ENCODE measurements at regions of chr1 and their contacts with region 1.

Region 1: DNA sequence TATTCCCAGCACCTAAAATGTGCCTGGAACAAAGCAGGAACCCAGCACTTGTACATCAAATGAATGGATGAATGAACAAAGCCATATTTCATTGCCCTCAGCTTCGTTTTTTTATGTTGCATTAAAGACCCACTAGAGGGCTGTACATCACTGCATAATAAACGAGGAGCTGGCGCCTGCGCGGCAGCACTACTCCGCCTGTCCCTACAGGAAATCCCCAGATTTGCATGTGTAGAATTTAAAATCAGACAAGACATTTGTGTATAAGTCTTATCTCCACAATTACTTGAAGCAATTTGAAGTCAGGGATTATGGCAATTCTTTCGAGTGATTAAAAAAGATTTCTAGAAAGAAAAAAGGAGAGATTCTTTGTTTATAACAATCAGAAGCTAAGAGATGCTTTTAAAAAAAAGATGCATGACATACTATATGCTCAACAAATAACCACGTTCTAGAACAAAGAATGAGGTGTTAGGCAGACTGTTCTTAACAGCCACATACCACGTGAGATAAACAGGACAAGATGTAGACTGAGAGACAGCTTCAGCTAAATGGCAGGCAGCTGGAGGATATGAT is 5.4 kb upstream of the NEK2 start:
- DNase-seq: peak; percentile 58 to 93
- ATAC-seq: peak; percentile 91 to 96 (median 93)
- H3K4me3 ChIP-seq: no peak overlapping the region
- H3K4me3 Mint-ChIP-seq: peak overlapping the region; percentile 74
- H3K27ac ChIP-seq: peak overlapping the region; percentile 77
- H3K27ac Mint-ChIP-seq: peak overlapping the region; percentile 91 to 98
- H3K4me1 ChIP-seq: peaks cover 30% of the 10 kb centered on the region
- H3K4me1 Mint-ChIP-seq: peaks cover 30 to 32% of the 10 kb centered on the region in 2 donors
- H3K27me3 ChIP-seq: no peaks in the 10 kb centered on the region
- H3K27me3 Mint-ChIP-seq: no peaks in the 10 kb centered on the region
- CTCF ChIP-seq: peak; percentile 72

Region 2: GRCh38 chr1:211667065-211667617 is 13.7 kb before region 1 on chr1:
- intact Hi-C with region 1: no loop called
- DNase-seq: no peak
- ATAC-seq: no peak
- H3K4me3 ChIP-seq: no peak overlapping the region
- H3K4me3 Mint-ChIP-seq: no peak overlapping the region
- H3K27ac ChIP-seq: no peak overlapping the region
- H3K27ac Mint-ChIP-seq: no peak overlapping the region
- H3K4me1 ChIP-seq: no peaks in the 10 kb centered on the region
- H3K4me1 Mint-ChIP-seq: no peaks in the 10 kb centered on the region
- H3K27me3 ChIP-seq: no peaks in the 10 kb centered on the region
- H3K27me3 Mint-ChIP-seq: no peaks in the 10 kb centered on the region
- CTCF ChIP-seq: no peak

Region 3: GRCh38 chr1:211732293-211732980 is 51.6 kb after region 1 on chr1:
- intact Hi-C with region 1: no loop called
- DNase-seq: no peak
- ATAC-seq: no peak
- H3K4me3 ChIP-seq: no peak overlapping the region
- H3K4me3 Mint-ChIP-seq: no peak overlapping the region
- H3K27ac ChIP-seq: no peak overlapping the region
- H3K27ac Mint-ChIP-seq: no peak overlapping the region
- H3K4me1 ChIP-seq: peaks cover 2% of the 10 kb centered on the region
- H3K4me1 Mint-ChIP-seq: peaks cover 2 to 3% of the 10 kb centered on the region in 2 donors
- H3K27me3 ChIP-seq: no peaks in the 10 kb centered on the region
- H3K27me3 Mint-ChIP-seq: peaks cover 0 to 8% of the 10 kb centered on the region in 2 donors
- CTCF ChIP-seq: no peak

Region 4: DNA sequence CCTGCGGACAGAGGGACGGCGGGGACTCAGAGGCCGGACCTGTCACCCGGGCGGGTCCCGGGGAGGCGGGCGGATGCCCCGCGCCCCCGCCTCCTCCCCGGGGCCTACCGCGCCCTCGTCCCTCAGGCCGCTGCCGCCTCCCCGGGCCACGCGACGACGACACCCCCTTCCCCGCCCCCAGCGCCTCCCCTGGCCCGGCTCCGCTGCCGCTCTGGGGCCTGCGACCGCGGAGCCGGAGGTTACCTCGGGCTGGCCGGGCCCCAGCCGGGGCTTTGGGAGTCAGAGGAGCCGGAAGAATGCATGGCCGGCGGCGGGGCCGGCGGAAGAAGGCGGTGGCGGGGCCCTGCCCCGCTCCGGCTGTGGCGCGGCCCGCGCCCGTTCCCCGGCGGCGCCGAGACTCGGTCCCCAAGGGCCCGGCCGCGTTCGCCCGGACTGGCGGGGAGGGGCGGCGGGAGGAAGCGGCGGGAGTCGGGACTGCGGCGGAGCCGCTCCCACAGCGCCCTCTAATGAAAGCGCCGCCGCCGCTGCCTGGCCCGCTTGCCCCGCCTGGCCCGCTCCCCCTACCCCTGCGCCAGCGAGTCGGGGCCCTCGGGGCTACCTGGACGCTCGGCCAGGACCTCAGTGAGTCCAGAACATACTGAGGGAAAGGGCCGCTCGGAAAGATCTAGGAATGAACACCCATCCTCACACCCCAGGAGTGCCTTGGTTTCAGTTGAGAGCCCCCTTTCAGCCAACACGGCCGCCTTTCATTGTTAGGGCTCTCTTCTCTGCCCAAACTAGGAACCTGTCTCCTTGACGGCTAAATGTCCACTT is 149.7 kb after region 1 on chr1 and contains the start of gene LPGAT1:
- intact Hi-C with region 1: loop called (anchors 2 kb)
- DNase-seq: peak; percentile 69 to 80
- ATAC-seq: peak; percentile 87 to 90 (median 87)
- H3K4me3 ChIP-seq: peak within 1 kb of the TSS; percentile 81
- H3K4me3 Mint-ChIP-seq: peak within 1 kb of the TSS; percentile 98
- H3K27ac ChIP-seq: peak within 1 kb of the TSS; percentile 87
- H3K27ac Mint-ChIP-seq: peak within 1 kb of the TSS; percentile 90 to 91
- H3K4me1 ChIP-seq: peaks cover 37% of the 10 kb centered on the region
- H3K4me1 Mint-ChIP-seq: peaks cover 58% of the 10 kb centered on the region in 2 donors
- H3K27me3 ChIP-seq: no peaks in the 10 kb centered on the region
- H3K27me3 Mint-ChIP-seq: no peaks in the 10 kb centered on the region
- CTCF ChIP-seq: peak; percentile 62
- total RNA-seq, gene LPGAT1: 58.6 to 76.3 (median 71.5) TPM

Region 5: DNA sequence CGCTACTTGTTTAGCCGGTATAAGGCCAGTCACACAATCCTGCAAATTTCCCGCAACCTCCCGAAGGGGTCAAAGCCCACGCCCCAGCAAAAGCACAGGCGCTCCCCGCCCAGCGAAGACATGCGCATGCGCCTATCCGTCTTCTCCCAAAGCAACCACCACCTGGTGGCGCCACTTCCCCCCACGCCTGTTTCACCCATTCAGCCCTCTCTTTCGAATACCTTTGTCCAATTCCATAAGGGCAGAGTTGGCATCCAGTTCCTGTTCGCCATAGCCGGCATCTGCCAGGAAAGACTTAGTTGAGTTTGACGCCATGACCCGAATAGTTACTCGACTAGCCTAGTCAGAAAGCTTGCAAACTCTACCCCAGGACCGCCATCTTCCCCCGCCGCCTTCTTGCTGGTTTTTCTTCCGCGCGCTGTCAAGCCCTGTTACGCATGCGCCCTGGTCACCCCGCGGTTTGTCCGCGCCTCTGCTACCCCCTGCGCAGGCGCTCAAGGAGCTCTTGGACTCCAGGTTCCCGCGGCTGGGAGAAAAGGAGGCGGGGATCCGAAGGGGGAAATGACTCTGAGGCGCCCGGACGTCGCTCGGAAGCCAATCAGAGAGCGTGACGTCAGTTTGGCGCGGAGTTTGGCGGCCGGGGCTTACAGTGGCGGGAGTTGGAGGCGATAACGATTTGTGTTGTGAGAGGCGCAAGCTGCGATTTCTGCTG is 354.4 kb after region 1 on chr1 and contains the starts of genes DTL and INTS7:
- intact Hi-C with region 1: loop called (anchors 1 kb)
- DNase-seq: peak; percentile 95 to 100
- ATAC-seq: peak; percentile 89 to 94 (median 90)
- H3K4me3 ChIP-seq: peak within 1 kb of the TSS; percentile 75
- H3K4me3 Mint-ChIP-seq: peak within 1 kb of the TSS; percentile 96
- H3K27ac ChIP-seq: peak within 1 kb of the TSS; percentile 65
- H3K27ac Mint-ChIP-seq: peak within 1 kb of the TSS; percentile 94 to 98
- H3K4me1 ChIP-seq: peaks cover 14% of the 10 kb centered on the region
- H3K4me1 Mint-ChIP-seq: peaks cover 42 to 51% of the 10 kb centered on the region in 2 donors
- H3K27me3 ChIP-seq: no peaks in the 10 kb centered on the region
- H3K27me3 Mint-ChIP-seq: no peaks in the 10 kb centered on the region
- CTCF ChIP-seq: peak; percentile 95
- total RNA-seq, gene DTL: 1.1 to 4.0 (median 3.3) TPM
- total RNA-seq, gene INTS7: 10.0 to 20.3 (median 11.0) TPM

Region 6: DNA sequence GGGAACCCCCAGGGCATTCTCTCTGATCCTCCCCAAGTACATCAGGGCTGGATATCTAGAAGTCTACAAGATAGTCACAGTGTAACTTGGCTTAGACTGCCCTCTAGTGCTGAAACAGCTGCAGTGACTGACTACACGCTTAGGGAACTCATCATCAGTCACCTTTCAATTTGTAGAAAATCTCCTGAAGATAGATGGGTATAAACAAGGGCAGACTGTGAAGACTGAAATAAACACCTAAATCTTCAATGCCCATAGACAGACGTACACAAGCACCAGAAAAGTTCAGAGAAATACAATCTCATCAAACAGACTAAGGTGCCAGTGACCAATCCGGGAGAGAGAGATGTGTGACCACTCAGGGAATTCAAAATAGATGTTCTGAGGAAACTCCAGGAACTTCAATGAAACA is 687.2 kb after region 1 on chr1:
- intact Hi-C with region 1: loop called (anchors 1 kb)
- DNase-seq: peak; percentile 32 to 81
- ATAC-seq: peak; percentile 93 to 99 (median 95)
- H3K4me3 ChIP-seq: no peak overlapping the region
- H3K4me3 Mint-ChIP-seq: no peak overlapping the region
- H3K27ac ChIP-seq: no peak overlapping the region
- H3K27ac Mint-ChIP-seq: peak overlapping the region; percentile 75 to 77
- H3K4me1 ChIP-seq: no peaks in the 10 kb centered on the region
- H3K4me1 Mint-ChIP-seq: peaks cover 7 to 13% of the 10 kb centered on the region in 2 donors
- H3K27me3 ChIP-seq: no peaks in the 10 kb centered on the region
- H3K27me3 Mint-ChIP-seq: no peaks in the 10 kb centered on the region
- CTCF ChIP-seq: peak; percentile 74

Measured in natural killer cell (primary cell).